ENCODE measurements at regions of chr3 and their contacts with region 1.

Region 1: DNA sequence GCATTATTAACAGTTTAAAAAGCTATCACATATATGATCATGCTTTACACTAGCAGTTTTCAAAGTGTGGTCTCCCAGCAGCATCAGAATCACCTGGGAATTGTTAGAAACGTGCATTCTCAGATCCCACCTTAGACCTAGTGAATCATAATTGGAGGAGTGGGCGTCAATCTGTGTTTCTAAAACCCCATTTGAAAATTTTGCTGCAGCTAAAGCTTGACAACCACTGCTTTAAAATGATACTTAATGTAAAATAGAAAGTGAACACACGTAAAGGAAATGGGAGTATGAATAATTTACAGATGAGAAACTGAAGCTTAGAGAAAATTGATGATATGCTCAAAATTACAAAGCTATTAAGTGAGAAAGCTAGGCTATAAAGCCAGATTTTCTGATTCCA is 62.3 kb downstream of the SLC9C1 start:
- DNase-seq: no peak
- H3K4me3 Mint-ChIP-seq: no peak overlapping the region
- H3K27ac Mint-ChIP-seq: no peak overlapping the region
- H3K4me1 Mint-ChIP-seq: peaks cover 10% of the 10 kb centered on the region
- H3K27me3 Mint-ChIP-seq: peaks cover 2% of the 10 kb centered on the region

Region 2: DNA sequence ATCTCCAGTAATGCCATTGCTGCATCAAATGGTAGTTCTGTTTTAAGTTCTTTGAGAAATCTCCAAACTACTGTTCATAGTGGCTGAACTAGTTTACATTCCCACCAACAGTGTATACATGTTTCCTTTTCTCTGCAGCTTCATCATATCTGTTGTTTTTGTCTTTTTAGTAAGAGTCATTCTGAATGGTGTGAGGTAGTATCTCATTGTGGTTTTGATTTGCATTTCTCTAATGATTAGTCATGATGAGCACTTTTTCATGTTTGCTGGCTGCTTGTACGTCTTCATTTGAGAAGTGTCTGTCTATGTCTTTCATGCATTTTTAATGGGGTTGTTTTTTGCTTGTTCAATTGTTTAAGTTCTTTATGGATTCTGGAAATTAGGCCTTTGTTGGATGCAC is 88.5 kb before region 1 on chr3:
- CTCF ChIA-PET with region 1: interaction called, 3 read pairs
- POLR2A ChIA-PET with region 1: no interaction called
- intact Hi-C with region 1: loop called (anchors 1 kb)
- DNase-seq: no peak
- H3K4me3 Mint-ChIP-seq: peak overlapping the region; percentile 53
- H3K27ac Mint-ChIP-seq: peak overlapping the region; percentile 77
- H3K4me1 Mint-ChIP-seq: peaks cover 30% of the 10 kb centered on the region
- H3K27me3 Mint-ChIP-seq: no peaks in the 10 kb centered on the region

Region 3: GRCh38 chr3:112199619-112200316 is 32.0 kb before region 1 on chr3:
- CTCF ChIA-PET with region 1: no interaction called
- POLR2A ChIA-PET with region 1: no interaction called
- intact Hi-C with region 1: no loop called
- DNase-seq: no peak
- H3K4me3 Mint-ChIP-seq: no peak overlapping the region
- H3K27ac Mint-ChIP-seq: no peak overlapping the region
- H3K4me1 Mint-ChIP-seq: no peaks in the 10 kb centered on the region
- H3K27me3 Mint-ChIP-seq: peaks cover 5% of the 10 kb centered on the region

Measured in activated CD4-positive, alpha-beta memory T cell treated with anti-CD3 and anti-CD28 coated beads for 36 hours (primary cell).